Heart left ventricle (tissue), 16 donors: ENCODE measurements at regions of chr2 and their contacts with region 1.

Region 1: GRCh38 chr2:157336137-157337010 is 10.8 kb upstream of the ERMN start:
- DNase-seq: peak in 3 of 5 donors; percentile 18 to 30 (median 21)
- ATAC-seq: peak in 2 of 4 donors; percentile 36 to 46
- H3K4me3 ChIP-seq: no peak overlapping the region
- H3K27ac ChIP-seq: no peak overlapping the region
- H3K4me1 ChIP-seq: no peaks in the 10 kb centered on the region
- H3K27me3 ChIP-seq: no peaks in the 10 kb centered on the region
- CTCF ChIP-seq: peak; percentile 46 to 74 (median 64)
- POLR2A ChIP-seq: no peak

Region 2: DNA sequence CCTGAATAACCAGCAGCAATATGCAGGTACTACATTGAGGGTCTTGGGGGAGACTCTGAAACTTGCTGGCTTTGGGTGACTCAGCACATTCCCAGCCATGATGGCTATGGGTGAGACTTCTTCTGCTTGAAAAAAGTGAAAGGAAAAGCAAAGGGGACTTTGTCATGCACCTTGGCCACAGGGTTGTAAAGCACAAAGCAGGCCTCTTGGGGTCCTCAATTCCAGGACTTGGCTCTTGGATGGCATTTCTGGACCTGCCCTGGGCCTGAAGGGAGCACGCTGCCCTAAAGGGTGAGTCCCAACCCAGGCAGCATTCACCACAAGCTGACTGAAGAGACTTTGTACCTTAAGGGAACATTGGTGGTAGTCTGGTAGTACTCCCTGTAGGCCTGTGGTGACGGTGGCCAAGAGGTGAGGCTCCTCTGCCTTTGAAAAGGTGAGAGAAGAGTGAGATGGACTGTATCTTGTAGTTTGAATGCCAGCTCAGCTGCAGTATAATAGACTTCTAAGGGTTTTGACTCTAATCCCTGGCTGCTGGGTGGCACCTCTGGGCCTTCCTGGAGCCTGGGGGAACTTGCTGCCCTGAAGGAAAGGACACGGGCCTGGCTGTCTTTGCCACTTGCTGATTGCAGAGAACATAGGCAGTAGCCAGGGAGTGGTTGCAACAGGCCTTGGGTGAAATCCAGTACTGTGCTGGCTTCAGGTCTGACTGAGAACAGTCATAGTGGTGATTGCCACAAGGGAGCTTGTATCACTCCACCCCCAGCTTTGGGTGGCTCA is 144.0 kb after region 1 on chr2:
- intact Hi-C with region 1: loop called in 2 of 10 experiments (anchors 10 kb)
- DNase-seq: peak; percentile 56 to 89 (median 75)
- ATAC-seq: peak; percentile 93 to 99 (median 98)
- H3K4me3 ChIP-seq: no peak overlapping the region
- H3K27ac ChIP-seq: peak overlapping the region; percentile 42 to 77 (median 56)
- H3K4me1 ChIP-seq: peaks cover 0 to 16% (median 6%) of the 10 kb centered on the region in 12 donors
- H3K27me3 ChIP-seq: no peaks in the 10 kb centered on the region
- CTCF ChIP-seq: no peak
- POLR2A ChIP-seq: no peak

Region 3: DNA sequence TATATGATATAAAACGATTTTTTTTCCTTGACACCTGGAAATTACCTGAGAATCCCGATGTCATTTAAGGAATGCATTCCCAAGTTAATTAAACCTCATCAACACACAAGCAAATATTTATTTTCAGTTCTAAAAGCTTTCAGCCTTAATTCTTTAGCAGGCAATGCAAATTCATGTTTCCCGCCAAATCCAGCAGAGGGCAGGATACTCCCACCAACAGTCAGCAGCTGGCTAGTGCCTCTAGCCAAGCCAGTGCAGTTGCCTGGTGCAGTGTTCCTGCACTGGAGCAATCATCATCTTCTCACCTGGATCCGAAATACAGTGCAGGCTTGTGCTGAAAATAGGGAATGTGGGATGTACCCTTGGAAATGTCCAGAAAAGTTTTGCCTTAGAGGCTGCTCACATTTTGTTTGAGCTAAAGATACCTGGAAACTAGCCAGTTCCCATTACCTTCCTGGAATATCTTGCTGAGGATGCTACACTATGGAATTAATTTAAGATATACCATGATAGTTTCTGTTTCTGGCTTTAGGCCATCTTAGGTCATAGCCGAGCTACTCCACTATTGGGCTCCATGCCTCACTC is 155.9 kb after region 1 on chr2:
- intact Hi-C with region 1: loop called in 3 of 10 experiments (anchors 10 kb)
- DNase-seq: peak; percentile 52 to 70 (median 64)
- ATAC-seq: peak in 3 of 4 donors; percentile 75 to 88 (median 85)
- H3K4me3 ChIP-seq: no peak overlapping the region
- H3K27ac ChIP-seq: no peak overlapping the region
- H3K4me1 ChIP-seq: no peaks in the 10 kb centered on the region
- H3K27me3 ChIP-seq: no peaks in the 10 kb centered on the region
- CTCF ChIP-seq: peak; percentile 53 to 80 (median 70)
- POLR2A ChIP-seq: no peak